A673 (cell line): ENCODE measurements at regions of chr10 and their contacts with region 1.

Region 1: GRCh38 chr10:32346134-32346550 is 816 bp downstream of the EPC1 start:
- DNase-seq: peak; percentile 98
- H3K4me3 ChIP-seq: peak overlapping the region; percentile 76
- H3K27ac ChIP-seq: peak overlapping the region; percentile 100
- H3K4me1 ChIP-seq: peaks cover 51% of the 10 kb centered on the region
- H3K27me3 ChIP-seq: no peaks in the 10 kb centered on the region
- CTCF ChIP-seq: peak; percentile 98

Region 2: GRCh38 chr10:32055813-32056600 is 290.1 kb before region 1 on chr10 and contains the start of gene KIF5B:
- CTCF ChIA-PET with region 1: no interaction called
- POLR2A ChIA-PET with region 1: no interaction called
- intact Hi-C with region 1: loop called (anchors 5 kb)
- DNase-seq: peak; percentile 91
- H3K4me3 ChIP-seq: peak within 1 kb of the TSS; percentile 97
- H3K27ac ChIP-seq: peak within 1 kb of the TSS; percentile 95
- H3K4me1 ChIP-seq: peaks cover 27% of the 10 kb centered on the region
- H3K27me3 ChIP-seq: no peaks in the 10 kb centered on the region
- CTCF ChIP-seq: no peak
- total RNA-seq, gene KIF5B: 135 and 148 TPM in 2 replicates

Region 3: DNA sequence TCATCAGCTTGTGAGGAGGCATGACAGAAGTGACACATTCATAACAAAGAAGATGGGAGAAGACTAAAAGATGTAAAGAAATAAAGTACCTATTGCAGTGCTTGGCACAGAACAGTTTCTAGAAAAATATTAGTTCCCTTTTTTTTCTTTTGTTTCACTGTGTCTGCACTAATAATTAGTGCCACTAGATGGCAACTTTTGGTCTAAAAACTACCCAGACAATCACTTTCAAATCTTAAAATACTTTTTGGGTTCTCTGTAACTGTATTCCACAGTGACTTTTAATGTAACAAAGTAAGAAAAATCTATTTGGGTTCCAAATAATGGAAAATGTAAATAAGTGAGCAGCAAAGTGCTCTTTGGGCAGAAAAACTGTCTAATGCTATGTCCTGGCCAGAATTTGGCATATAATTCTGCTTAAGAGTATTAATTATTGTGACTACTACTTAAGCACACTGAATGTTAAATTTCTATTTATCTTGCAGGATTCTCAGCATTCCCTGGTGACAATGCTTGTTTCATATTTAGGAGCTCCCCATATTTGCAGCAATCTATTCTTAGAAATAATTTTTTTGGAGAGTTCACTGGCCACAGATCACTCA is 155.2 kb before region 1 on chr10:
- CTCF ChIA-PET with region 1: interaction called, 4 read pairs
- POLR2A ChIA-PET with region 1: no interaction called
- intact Hi-C with region 1: loop called (anchors 10 kb)
- DNase-seq: peak; percentile 64
- H3K4me3 ChIP-seq: no peak overlapping the region
- H3K27ac ChIP-seq: no peak overlapping the region
- H3K4me1 ChIP-seq: no peaks in the 10 kb centered on the region
- H3K27me3 ChIP-seq: no peaks in the 10 kb centered on the region
- CTCF ChIP-seq: peak; percentile 80

Region 4: DNA sequence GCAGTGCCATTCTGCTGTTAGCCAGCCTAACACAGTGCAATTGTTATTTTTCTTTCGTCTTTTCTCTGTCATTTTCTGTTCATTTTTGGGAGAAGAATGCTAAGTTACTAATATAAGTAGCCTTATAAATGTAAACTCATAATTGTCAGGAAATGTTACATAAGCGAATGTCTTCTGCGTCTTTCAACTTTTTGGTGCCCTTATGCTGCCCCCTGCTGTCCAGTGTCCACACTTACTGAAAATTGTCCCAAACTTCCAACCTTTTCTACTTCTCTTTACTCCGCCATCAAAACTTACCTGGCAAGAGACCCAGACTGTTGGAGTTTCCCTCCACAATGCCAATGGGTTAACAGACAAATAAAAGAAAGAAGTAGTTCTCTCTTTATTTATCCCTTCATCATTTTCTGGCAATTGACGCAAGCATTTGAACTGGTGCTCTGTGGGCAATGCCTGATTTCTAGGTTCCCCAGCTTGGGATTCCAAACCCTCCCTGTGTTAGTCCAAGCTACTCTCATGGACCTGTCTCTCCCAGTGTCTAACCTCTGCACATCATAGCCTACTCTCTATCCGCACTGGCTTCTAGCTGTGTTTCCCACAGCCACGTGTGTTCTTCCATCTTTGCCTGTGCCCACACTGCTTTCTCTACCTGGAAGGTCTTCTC is 21.8 kb after region 1 on chr10:
- CTCF ChIA-PET with region 1: no interaction called
- POLR2A ChIA-PET with region 1: interaction called, 16 read pairs
- intact Hi-C with region 1: no loop called
- DNase-seq: peak; percentile 84
- H3K4me3 ChIP-seq: peak overlapping the region; percentile 76
- H3K27ac ChIP-seq: peak overlapping the region; percentile 69
- H3K4me1 ChIP-seq: peaks cover 54% of the 10 kb centered on the region
- H3K27me3 ChIP-seq: no peaks in the 10 kb centered on the region
- CTCF ChIP-seq: peak; percentile 78

Region 5: GRCh38 chr10:32445740-32446535 is 99.8 kb after region 1 on chr10 and contains the start of gene CCDC7:
- CTCF ChIA-PET with region 1: no interaction called
- POLR2A ChIA-PET with region 1: interaction called, 4 read pairs
- intact Hi-C with region 1: loop called (anchors 2 kb)
- DNase-seq: peak; percentile 97
- H3K4me3 ChIP-seq: peak within 1 kb of the TSS; percentile 64
- H3K27ac ChIP-seq: peak within 1 kb of the TSS; percentile 96
- H3K4me1 ChIP-seq: peaks cover 6% of the 10 kb centered on the region
- H3K27me3 ChIP-seq: no peaks in the 10 kb centered on the region
- CTCF ChIP-seq: peak; percentile 55
- total RNA-seq, gene CCDC7: 12.5 and 16.4 TPM in 2 replicates